ENCODE measurements at regions of chr6 and their contacts with region 1.

Region 1: DNA sequence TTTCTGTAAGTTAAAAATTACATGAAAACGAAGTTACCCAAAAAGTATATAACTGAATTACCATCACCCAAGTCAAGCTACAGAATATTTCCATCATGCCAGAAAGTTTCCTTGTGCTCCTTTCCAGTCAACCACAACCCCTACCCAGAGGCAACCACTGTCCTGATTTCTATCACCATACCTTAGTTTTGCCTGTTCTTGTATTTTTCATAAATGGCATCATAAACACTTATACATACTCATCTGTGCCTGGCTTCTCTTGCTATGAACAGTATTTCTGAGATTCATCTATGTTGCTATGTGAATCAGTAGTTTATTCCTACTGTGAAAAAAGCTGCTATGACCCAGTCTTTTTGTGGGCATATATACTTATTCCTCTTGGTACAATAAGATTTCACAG is 7.4 kb downstream of the FKBP5 start:
- DNase-seq: no peak
- H3K4me3 Mint-ChIP-seq: no peak overlapping the region
- H3K27ac Mint-ChIP-seq: peak overlapping the region; percentile 20
- H3K4me1 Mint-ChIP-seq: peaks cover 45% of the 10 kb centered on the region
- H3K27me3 Mint-ChIP-seq: no peaks in the 10 kb centered on the region

Region 2: GRCh38 chr6:35663447-35664235 is 17.7 kb before region 1 on chr6:
- intact Hi-C with region 1: loop called (anchors 2 kb)
- DNase-seq: no peak
- H3K4me3 Mint-ChIP-seq: no peak overlapping the region
- H3K27ac Mint-ChIP-seq: no peak overlapping the region
- H3K4me1 Mint-ChIP-seq: peaks cover 8% of the 10 kb centered on the region
- H3K27me3 Mint-ChIP-seq: no peaks in the 10 kb centered on the region

Region 3: GRCh38 chr6:35719830-35720733 is 38.8 kb after region 1 on chr6:
- intact Hi-C with region 1: loop called (anchors 1 kb)
- DNase-seq: no peak
- H3K4me3 Mint-ChIP-seq: peak overlapping the region; percentile 40
- H3K27ac Mint-ChIP-seq: peak overlapping the region; percentile 95
- H3K4me1 Mint-ChIP-seq: peaks cover 43% of the 10 kb centered on the region
- H3K27me3 Mint-ChIP-seq: no peaks in the 10 kb centered on the region

Measured in activated T-helper 2 cell treated with anti-CD3 and anti-CD28 coated beads, Interferon-gamma antibody, Interleukin-2, Interleukin-4, amounts not matched to agents 10 μg/mL and 5 μg/mL and 100 μg/mL, durations not matched to agents 14 hours and 24 hours and 36 hours (primary cell).